PC-9 (cell line): ENCODE measurements at regions of chr3 and their contacts with region 1.

Region 1: GRCh38 chr3:131033480-131034080 is 6.9 kb downstream of the NEK11 start:
- DNase-seq: peak; percentile 9 to 51
- H3K4me3 ChIP-seq: no peak overlapping the region
- H3K27ac ChIP-seq: no peak overlapping the region
- H3K4me1 ChIP-seq: no peaks in the 10 kb centered on the region
- H3K27me3 ChIP-seq: no peaks in the 10 kb centered on the region
- CTCF ChIP-seq: peak; percentile 86

Region 2: GRCh38 chr3:131485119-131485518 is 451.5 kb after region 1 on chr3:
- CTCF ChIA-PET with region 1: no interaction called
- POLR2A ChIA-PET with region 1: no interaction called
- intact Hi-C with region 1: loop called (anchors 10 kb)
- DNase-seq: no peak
- H3K4me3 ChIP-seq: no peak overlapping the region
- H3K27ac ChIP-seq: no peak overlapping the region
- H3K4me1 ChIP-seq: no peaks in the 10 kb centered on the region
- H3K27me3 ChIP-seq: no peaks in the 10 kb centered on the region
- CTCF ChIP-seq: no peak

Region 3: GRCh38 chr3:131794766-131795388 is 761.3 kb after region 1 on chr3:
- CTCF ChIA-PET with region 1: no interaction called
- POLR2A ChIA-PET with region 1: no interaction called
- intact Hi-C with region 1: loop called (anchors 5 kb)
- DNase-seq: peak; percentile 32 to 44
- H3K4me3 ChIP-seq: no peak overlapping the region
- H3K27ac ChIP-seq: no peak overlapping the region
- H3K4me1 ChIP-seq: peaks cover 8% of the 10 kb centered on the region
- H3K27me3 ChIP-seq: no peaks in the 10 kb centered on the region
- CTCF ChIP-seq: peak; percentile 87

Region 4: DNA sequence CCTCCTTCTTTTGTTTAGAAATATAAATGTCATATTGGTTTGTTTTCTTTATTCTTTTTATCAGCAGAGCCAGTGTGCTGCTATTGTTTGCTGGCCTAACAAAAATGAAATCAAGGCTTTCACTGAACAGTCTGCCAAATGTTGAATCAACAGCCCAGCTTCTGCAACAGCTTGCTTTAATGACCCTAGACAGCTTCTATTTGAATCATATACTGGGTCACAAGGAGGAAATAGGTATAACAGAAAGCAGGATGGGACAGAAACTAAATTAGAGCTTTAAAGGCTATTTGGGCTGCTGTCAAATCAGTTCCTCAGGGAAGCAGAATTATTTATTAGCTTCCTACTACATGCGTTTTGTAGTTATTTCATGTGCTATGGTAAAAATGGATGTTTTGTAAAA is 1371.6 kb after region 1 on chr3:
- CTCF ChIA-PET with region 1: no interaction called
- POLR2A ChIA-PET with region 1: no interaction called
- intact Hi-C with region 1: loop called (anchors 10 kb)
- DNase-seq: no peak
- H3K4me3 ChIP-seq: no peak overlapping the region
- H3K27ac ChIP-seq: no peak overlapping the region
- H3K4me1 ChIP-seq: no peaks in the 10 kb centered on the region
- H3K27me3 ChIP-seq: no peaks in the 10 kb centered on the region
- CTCF ChIP-seq: no peak